ENCODE measurements at regions of chr1 and their contacts with region 1.

Region 1: GRCh38 chr1:229341774-229342655 is 832 bp downstream of the CCSAP start:
- DNase-seq: peak; percentile 84
- H3K4me3 Mint-ChIP-seq: peak overlapping the region; percentile 83
- H3K27ac Mint-ChIP-seq: peak overlapping the region; percentile 80
- H3K4me1 Mint-ChIP-seq: peaks cover 53% of the 10 kb centered on the region
- H3K27me3 Mint-ChIP-seq: peaks cover 17% of the 10 kb centered on the region

Region 2: GRCh38 chr1:229270547-229271447 is 71.2 kb before region 1 on chr1 and contains the start of gene RAB4A:
- CTCF ChIA-PET with region 1: interaction called, 4 read pairs
- POLR2A ChIA-PET with region 1: interaction called, 12 read pairs
- DNase-seq: peak; percentile 82
- H3K4me3 Mint-ChIP-seq: peak within 1 kb of the TSS; percentile 89
- H3K27ac Mint-ChIP-seq: peak within 1 kb of the TSS; percentile 68
- H3K4me1 Mint-ChIP-seq: peaks cover 38% of the 10 kb centered on the region
- H3K27me3 Mint-ChIP-seq: no peaks in the 10 kb centered on the region
- total RNA-seq, gene RAB4A: 30.9 to 38.0 TPM

Region 3: GRCh38 chr1:229325853-229326502 is 16.0 kb before region 1 on chr1:
- CTCF ChIA-PET with region 1: no interaction called
- POLR2A ChIA-PET with region 1: interaction called, 14 read pairs
- DNase-seq: no peak
- H3K4me3 Mint-ChIP-seq: peak overlapping the region; percentile 52
- H3K27ac Mint-ChIP-seq: peak overlapping the region; percentile 78
- H3K4me1 Mint-ChIP-seq: peaks cover 40% of the 10 kb centered on the region
- H3K27me3 Mint-ChIP-seq: no peaks in the 10 kb centered on the region

Region 4: GRCh38 chr1:229352975-229353374 is 11.0 kb after region 1 on chr1:
- CTCF ChIA-PET with region 1: no interaction called
- POLR2A ChIA-PET with region 1: no interaction called
- DNase-seq: no peak
- H3K4me3 Mint-ChIP-seq: no peak overlapping the region
- H3K27ac Mint-ChIP-seq: no peak overlapping the region
- H3K4me1 Mint-ChIP-seq: no peaks in the 10 kb centered on the region
- H3K27me3 Mint-ChIP-seq: peaks cover 62% of the 10 kb centered on the region

Region 5: GRCh38 chr1:229440851-229441537 is 99.0 kb after region 1 on chr1:
- CTCF ChIA-PET with region 1: interaction called, 3 read pairs
- POLR2A ChIA-PET with region 1: interaction called, 12 read pairs
- DNase-seq: no peak
- H3K4me3 Mint-ChIP-seq: no peak overlapping the region
- H3K27ac Mint-ChIP-seq: peak overlapping the region; percentile 58
- H3K4me1 Mint-ChIP-seq: peaks cover 23% of the 10 kb centered on the region
- H3K27me3 Mint-ChIP-seq: peaks cover 24% of the 10 kb centered on the region

Region 6: DNA sequence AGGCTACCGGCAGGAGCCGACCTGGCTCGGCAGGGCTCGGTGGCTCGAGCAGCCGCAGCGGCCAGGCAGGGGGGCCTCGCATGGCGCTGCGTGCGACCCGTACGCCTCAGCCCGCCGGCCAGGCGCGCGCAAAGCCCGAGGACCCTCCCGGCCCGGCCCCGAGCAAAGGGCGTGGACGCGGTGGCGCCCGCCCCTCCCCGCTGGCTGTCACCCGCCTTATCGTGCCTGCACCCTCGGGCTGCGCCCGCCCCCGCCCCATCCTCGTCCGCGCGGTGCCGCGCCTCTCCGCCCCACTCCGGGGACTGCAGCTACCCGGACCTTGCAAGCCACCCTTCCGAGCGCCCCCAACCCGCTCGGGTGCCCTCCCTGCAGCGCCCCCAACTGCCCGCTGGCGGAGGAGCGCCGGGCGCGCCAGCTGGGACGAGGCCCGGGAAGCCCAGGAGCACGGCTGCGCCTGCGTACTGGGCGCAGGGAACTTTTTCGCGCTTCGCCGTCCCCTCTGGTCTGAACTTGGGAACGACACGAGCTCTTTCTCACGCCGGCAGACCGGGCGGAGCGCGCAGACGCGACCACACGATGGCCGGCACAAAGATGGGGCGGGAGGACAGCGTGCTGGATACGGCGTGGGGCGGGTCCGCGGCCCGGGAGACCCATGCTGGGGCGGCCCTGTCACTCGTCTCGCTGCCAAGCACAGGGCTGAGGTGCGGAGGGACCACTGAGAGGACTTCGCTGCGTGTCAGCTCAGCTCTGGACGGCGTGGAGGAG is 216.7 kb after region 1 on chr1 and contains the start of gene ABCB10:
- CTCF ChIA-PET with region 1: no interaction called
- POLR2A ChIA-PET with region 1: interaction called, 11 read pairs
- DNase-seq: peak; percentile 86
- H3K4me3 Mint-ChIP-seq: peak within 1 kb of the TSS; percentile 98
- H3K27ac Mint-ChIP-seq: peak within 1 kb of the TSS; percentile 93
- H3K4me1 Mint-ChIP-seq: peaks cover 37% of the 10 kb centered on the region
- H3K27me3 Mint-ChIP-seq: peaks cover 4% of the 10 kb centered on the region
- total RNA-seq, gene ABCB10: 29.8 to 31.1 TPM

Measured in activated CD4-positive, alpha-beta memory T cell treated with anti-CD3 and anti-CD28 coated beads, Interleukin-2, amount 10 ng/mL, durations not matched to agents 7 days and 5 days (primary cell).